Heart left ventricle (tissue), 16 donors: ENCODE measurements at regions of chr1 and their contacts with region 1.

Region 1: GRCh38 chr1:55375617-55376258 is 160.6 kb upstream of the USP24 start:
- DNase-seq: peak in 2 of 5 donors; percentile 36 to 60
- ATAC-seq: peak in 1 of 4 donors; percentile 50
- H3K4me3 ChIP-seq: no peak overlapping the region
- H3K27ac ChIP-seq: peak overlapping the region in 1 of 12 donors; percentile 0
- H3K4me1 ChIP-seq: peaks cover 0 to 10% (median 0%) of the 10 kb centered on the region in 12 donors
- H3K27me3 ChIP-seq: no peaks in the 10 kb centered on the region
- CTCF ChIP-seq: peak; percentile 86 to 97 (median 92)
- POLR2A ChIP-seq: no peak

Region 2: GRCh38 chr1:55886856-55887712 is 511.3 kb after region 1 on chr1:
- intact Hi-C with region 1: loop called in 3 of 10 experiments (anchors 5 to 10 kb)
- DNase-seq: no peak
- ATAC-seq: no peak
- H3K4me3 ChIP-seq: no peak overlapping the region
- H3K27ac ChIP-seq: no peak overlapping the region
- H3K4me1 ChIP-seq: no peaks in the 10 kb centered on the region
- H3K27me3 ChIP-seq: no peaks in the 10 kb centered on the region
- CTCF ChIP-seq: no peak
- POLR2A ChIP-seq: no peak

Region 3: DNA sequence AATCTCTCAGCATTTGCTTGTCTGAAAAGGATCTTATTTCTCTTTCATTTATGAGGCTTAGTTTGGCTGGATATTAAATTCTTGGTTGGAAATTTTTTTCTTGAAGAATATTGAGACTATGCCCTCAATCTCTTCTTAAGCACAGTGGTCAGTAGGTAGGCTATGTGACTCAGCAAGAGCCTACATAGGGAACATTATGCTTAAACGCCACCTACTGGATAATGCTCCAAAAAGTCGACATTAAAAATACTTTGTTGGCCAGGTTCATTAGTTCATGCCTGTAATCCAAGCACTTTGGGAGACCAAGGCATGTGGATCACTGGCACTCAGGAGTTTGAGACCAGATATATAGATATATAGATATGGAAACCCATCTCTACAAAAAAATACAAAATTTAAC is 517.4 kb after region 1 on chr1:
- intact Hi-C with region 1: loop called in 3 of 10 experiments (anchors 5 to 10 kb)
- DNase-seq: no peak
- ATAC-seq: peak in 1 of 4 donors; percentile 36
- H3K4me3 ChIP-seq: no peak overlapping the region
- H3K27ac ChIP-seq: no peak overlapping the region
- H3K4me1 ChIP-seq: no peaks in the 10 kb centered on the region
- H3K27me3 ChIP-seq: no peaks in the 10 kb centered on the region
- CTCF ChIP-seq: peak in 8 of 12 donors; percentile 9 to 39 (median 22)
- POLR2A ChIP-seq: no peak

Region 4: DNA sequence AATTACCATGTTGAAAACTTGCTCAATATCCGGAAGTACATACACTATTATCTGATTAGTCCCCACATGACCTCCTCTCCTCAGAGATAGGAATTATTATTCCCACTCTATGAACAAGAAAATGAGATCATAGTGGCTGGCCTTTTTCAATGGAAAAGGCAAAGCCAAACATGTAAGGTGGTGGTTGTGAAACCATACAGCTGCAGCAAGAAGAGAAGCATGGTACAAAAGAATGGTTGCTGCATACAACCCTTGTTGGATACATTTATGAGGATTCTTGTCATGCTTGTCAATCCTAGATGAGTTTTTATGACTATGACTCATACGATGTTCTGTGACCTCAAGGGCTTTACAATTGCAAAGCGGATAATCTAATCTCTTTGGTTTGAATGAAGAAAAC is 689.0 kb after region 1 on chr1:
- intact Hi-C with region 1: no loop called
- DNase-seq: no peak
- ATAC-seq: peak in 3 of 4 donors; percentile 36 to 68 (median 65)
- H3K4me3 ChIP-seq: no peak overlapping the region
- H3K27ac ChIP-seq: no peak overlapping the region
- H3K4me1 ChIP-seq: peaks cover 0 to 8% (median 0%) of the 10 kb centered on the region in 12 donors
- H3K27me3 ChIP-seq: no peaks in the 10 kb centered on the region
- CTCF ChIP-seq: no peak
- POLR2A ChIP-seq: no peak

Region 5: GRCh38 chr1:56409094-56409691 is 1033.5 kb after region 1 on chr1:
- intact Hi-C with region 1: loop called in 1 of 10 experiments (anchors 10 kb)
- DNase-seq: peak in 1 of 5 donors; percentile 43
- ATAC-seq: no peak
- H3K4me3 ChIP-seq: no peak overlapping the region
- H3K27ac ChIP-seq: no peak overlapping the region
- H3K4me1 ChIP-seq: peaks cover 0 to 36% (median 14%) of the 10 kb centered on the region in 12 donors
- H3K27me3 ChIP-seq: no peaks in the 10 kb centered on the region
- CTCF ChIP-seq: peak in 11 of 12 donors; percentile 19 to 40 (median 30)
- POLR2A ChIP-seq: no peak

Region 6: GRCh38 chr1:56709269-56709880 is 1333.6 kb after region 1 on chr1:
- intact Hi-C with region 1: loop called in 2 of 10 experiments (anchors 10 kb)
- DNase-seq: no peak
- ATAC-seq: peak in 3 of 4 donors; percentile 53 to 77 (median 58)
- H3K4me3 ChIP-seq: no peak overlapping the region
- H3K27ac ChIP-seq: no peak overlapping the region
- H3K4me1 ChIP-seq: peaks cover 0 to 18% (median 0%) of the 10 kb centered on the region in 12 donors
- H3K27me3 ChIP-seq: no peaks in the 10 kb centered on the region
- CTCF ChIP-seq: peak; percentile 40 to 72 (median 62)
- POLR2A ChIP-seq: no peak